ENCODE measurements at regions of chr13 and their contacts with region 1.

Region 1: GRCh38 chr13:75405976-75406703 is 75.8 kb downstream of the TBC1D4 start:
- DNase-seq: no peak
- ATAC-seq: peak; percentile 79

Region 2: DNA sequence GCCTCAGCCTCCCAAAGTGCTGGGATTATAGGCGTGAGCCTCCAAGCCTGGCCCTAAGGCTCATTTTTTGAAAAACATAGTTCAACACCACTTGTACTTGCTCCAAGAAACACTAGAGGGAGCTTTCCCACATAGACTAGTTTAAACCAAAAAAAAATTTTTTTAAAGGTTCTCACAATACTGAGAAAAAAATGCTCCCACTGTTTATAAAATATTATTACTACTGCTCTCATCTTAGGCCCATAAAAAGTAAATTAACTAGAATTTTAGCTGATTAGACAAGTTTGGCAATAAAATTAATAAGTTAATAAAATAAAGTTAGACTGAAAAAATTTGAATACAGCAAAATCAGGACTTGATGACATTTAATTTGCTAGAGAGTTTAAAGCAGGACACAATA is 33.6 kb before region 1 on chr13:
- intact Hi-C with region 1: loop called (anchors 2 kb)
- DNase-seq: no peak
- ATAC-seq: peak; percentile 53

Region 3: GRCh38 chr13:75437582-75438318 is 31.6 kb after region 1 on chr13:
- intact Hi-C with region 1: loop called (anchors 5 kb)
- DNase-seq: no peak
- ATAC-seq: peak; percentile 79

Measured in Right ventricle myocardium inferior (tissue), 1 donor.